Right ventricle myocardium superior (tissue), 1 donor: ENCODE measurements at regions of chr16 and their contacts with region 1.

Region 1: DNA sequence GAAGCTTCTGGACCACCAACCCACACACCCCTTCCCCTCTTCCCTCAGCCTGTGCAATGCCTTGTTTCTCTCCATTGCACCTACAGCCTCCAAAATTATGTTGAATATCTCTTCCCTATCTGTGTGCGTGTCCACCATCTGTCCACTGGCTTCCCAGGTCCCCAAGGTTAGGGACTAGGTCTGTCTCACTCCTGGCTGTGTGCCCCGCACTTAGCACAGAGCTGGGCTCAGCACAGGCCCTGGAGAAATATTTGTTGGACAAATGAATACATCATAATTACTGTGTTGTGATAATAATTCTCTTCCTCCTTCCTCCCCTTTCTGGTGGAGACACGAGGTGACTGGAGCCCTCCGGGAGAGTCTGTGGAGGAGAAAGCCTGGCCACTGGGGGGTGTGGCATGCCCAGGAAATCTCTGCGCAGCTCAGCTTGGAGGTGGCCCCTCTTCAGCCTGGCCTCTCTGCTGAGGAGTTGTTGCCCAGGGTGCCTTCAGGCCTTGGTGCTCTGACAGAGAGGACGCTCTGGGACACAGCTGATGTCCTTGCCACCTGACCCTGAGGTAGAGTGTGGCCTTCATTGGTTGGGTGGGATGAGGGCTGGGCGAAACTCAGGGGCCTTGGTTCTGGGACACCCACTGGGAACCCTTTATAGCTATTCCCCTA is 3.3 kb upstream of the BRD7 start:
- DNase-seq: peak; percentile 42
- ATAC-seq: peak; percentile 32

Region 2: GRCh38 chr16:50185005-50185505 is 187.0 kb before region 1 on chr16:
- intact Hi-C with region 1: no loop called
- DNase-seq: no peak
- ATAC-seq: peak; percentile 18

Region 3: DNA sequence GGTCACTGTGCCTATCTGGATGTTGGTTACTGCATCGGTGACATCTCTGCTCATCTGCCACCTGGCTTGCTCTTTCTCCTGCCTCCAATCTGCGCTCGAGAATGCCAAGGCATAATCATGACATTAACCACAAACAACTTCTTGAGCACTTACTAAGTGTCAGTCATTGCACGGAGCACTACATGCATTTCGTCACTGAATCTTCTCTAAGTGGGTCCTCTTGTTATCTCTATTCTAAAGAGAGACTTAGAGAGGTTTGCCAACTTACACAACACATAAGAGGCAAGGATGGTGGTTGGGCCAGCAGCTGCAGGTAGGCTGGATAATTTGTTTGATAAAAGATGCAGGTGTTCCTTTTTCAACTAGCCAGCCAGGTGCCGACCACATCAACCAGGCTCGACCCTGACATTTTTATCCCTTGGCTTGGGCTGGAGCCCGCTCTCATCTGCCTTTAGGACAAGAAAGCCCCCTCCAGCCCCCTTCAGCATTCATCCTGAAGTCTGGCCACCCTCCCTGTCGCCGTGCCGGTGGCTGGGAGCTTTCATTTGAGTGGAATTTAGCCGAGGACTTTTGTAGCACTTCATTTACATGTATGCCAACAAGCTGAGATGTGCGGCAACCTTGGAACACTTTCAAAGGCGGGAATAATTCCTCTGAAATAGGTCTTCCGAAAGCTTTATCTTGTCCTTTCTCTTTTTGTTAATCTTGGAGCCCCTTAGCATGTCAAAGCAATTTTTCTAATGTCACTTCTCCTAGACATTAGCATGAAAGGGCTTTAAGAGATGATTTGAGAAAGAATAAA is 86.8 kb after region 1 on chr16:
- intact Hi-C with region 1: no loop called
- DNase-seq: no peak
- ATAC-seq: peak; percentile 31

Region 4: GRCh38 chr16:50665128-50665878 is 293.2 kb after region 1 on chr16:
- intact Hi-C with region 1: loop called (anchors 10 kb)
- DNase-seq: peak; percentile 86
- ATAC-seq: peak; percentile 94